MCF 10A (cell line): ENCODE measurements at regions of chr9 and their contacts with region 1.

Region 1: GRCh38 chr9:15306757-15307534 is at the start of gene TTC39B:
- DNase-seq: peak; percentile 94
- H3K4me3 Mint-ChIP-seq: peak within 1 kb of the TSS; percentile 95
- H3K27ac Mint-ChIP-seq: peak within 1 kb of the TSS; percentile 95
- H3K4me1 Mint-ChIP-seq: peaks cover 35% of the 10 kb centered on the region
- H3K27me3 Mint-ChIP-seq: no peaks in the 10 kb centered on the region
- CTCF ChIP-seq: no peak
- total RNA-seq, gene TTC39B: 22.8 and 23.3 TPM in 2 replicates

Region 2: GRCh38 chr9:15211160-15211814 is 95.7 kb before region 1 on chr9:
- CTCF ChIA-PET with region 1: interaction called, 8 read pairs
- POLR2A ChIA-PET with region 1: interaction called, 5 read pairs
- intact Hi-C with region 1: loop called (anchors 5 kb)
- DNase-seq: peak; percentile 70
- H3K4me3 Mint-ChIP-seq: no peak overlapping the region
- H3K27ac Mint-ChIP-seq: no peak overlapping the region
- H3K4me1 Mint-ChIP-seq: no peaks in the 10 kb centered on the region
- H3K27me3 Mint-ChIP-seq: no peaks in the 10 kb centered on the region
- CTCF ChIP-seq: peak; percentile 63

Region 3: GRCh38 chr9:15295761-15296405 is 11.1 kb before region 1 on chr9:
- CTCF ChIA-PET with region 1: interaction called, 4 read pairs
- POLR2A ChIA-PET with region 1: interaction called, 158 read pairs
- intact Hi-C with region 1: loop called (anchors 1 kb)
- DNase-seq: peak; percentile 61
- H3K4me3 Mint-ChIP-seq: peak overlapping the region; percentile 74
- H3K27ac Mint-ChIP-seq: peak overlapping the region; percentile 96
- H3K4me1 Mint-ChIP-seq: peaks cover 32% of the 10 kb centered on the region
- H3K27me3 Mint-ChIP-seq: no peaks in the 10 kb centered on the region
- CTCF ChIP-seq: no peak

Region 4: DNA sequence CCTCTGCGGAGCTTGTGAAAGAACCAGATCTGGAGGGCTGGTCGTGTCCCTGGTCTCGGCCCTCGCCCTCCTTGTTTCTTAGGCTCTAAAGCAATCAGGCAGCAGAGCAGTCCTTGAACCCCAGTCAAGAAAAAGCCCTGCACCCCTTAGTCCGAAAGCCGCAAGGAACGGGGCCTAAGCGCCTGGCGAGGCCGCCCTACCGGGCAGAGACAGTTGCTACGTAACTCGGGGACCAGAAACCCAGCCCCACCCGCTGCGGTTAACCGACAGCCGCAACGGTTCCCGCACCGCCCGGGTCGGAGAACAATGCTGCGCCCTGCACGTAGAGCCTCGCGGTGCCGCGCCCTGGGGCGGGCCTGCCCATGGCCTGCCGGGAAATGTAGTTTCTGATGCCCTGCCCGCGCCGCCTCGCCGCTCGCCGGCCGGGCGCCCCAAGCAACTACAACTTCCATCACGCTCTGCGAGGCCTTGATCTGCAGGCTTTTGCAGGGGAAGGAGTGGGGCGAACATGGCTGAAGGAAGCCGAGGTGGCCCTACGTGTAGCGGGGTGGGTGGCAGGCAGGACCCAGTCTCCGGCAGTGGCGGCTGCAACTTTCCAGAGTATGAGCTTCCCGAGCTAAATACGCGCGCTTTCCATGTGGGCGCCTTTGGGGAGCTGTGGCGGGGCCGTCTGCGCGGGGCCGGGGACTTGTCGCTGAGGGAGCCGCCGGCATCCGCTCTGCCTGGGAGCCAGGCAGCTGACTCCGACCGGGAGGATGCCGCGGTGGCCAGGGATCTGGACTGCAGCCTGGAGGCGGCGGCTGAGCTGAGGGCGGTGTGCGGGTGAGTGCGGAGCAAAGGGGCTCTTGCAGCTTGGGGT is 115.7 kb after region 1 on chr9 and contains the start of gene SNAPC3:
- CTCF ChIA-PET with region 1: interaction called, 6 read pairs
- POLR2A ChIA-PET with region 1: interaction called, 48 read pairs
- intact Hi-C with region 1: loop called (anchors 1 kb)
- DNase-seq: peak; percentile 94
- H3K4me3 Mint-ChIP-seq: peak within 1 kb of the TSS; percentile 79
- H3K27ac Mint-ChIP-seq: peak within 1 kb of the TSS; percentile 84
- H3K4me1 Mint-ChIP-seq: peaks cover 21% of the 10 kb centered on the region
- H3K27me3 Mint-ChIP-seq: no peaks in the 10 kb centered on the region
- CTCF ChIP-seq: no peak
- total RNA-seq, gene SNAPC3: 20.7 and 21.9 TPM in 2 replicates

Region 5: GRCh38 chr9:15578714-15579113 is 271.8 kb after region 1 on chr9:
- CTCF ChIA-PET with region 1: no interaction called
- POLR2A ChIA-PET with region 1: no interaction called
- intact Hi-C with region 1: no loop called
- DNase-seq: no peak
- H3K4me3 Mint-ChIP-seq: no peak overlapping the region
- H3K27ac Mint-ChIP-seq: no peak overlapping the region
- H3K4me1 Mint-ChIP-seq: no peaks in the 10 kb centered on the region
- H3K27me3 Mint-ChIP-seq: no peaks in the 10 kb centered on the region
- CTCF ChIP-seq: no peak